Common myeloid progenitor, CD34-positive (primary cell): ENCODE measurements at regions of chr1 and their contacts with region 1.

Region 1: DNA sequence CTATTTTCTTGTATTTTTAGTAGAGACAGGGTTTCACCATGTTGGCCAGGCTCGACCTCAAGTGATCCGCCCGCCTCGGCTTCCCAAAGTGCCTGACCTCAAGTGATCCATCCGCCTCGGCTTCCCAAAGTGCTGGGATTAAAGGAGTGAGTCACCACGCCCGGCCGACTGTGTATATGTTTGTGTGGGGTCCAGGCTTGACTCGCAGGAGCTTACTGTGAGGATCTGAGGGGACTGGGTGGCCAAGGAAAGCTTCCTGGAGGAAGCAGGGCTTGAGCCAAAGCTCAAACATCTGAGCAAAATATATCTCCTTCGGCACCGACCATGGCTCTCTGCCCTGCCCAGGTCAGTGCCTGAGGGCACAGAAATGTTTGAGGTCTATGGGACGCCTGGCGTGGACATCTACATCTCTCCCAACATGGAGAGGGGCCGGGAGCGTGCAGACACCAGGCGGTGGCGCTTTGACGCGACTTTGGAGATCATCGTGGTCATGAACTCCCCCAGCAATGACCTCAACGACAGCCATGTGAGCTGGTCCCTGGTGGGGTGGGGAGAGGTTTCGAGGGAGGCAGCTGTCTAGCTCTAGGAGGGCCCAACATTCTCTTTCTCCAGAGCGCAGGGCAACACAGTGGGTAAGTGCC is 10.5 kb downstream of the PADI3 start:
- DNase-seq: no peak
- H3K4me3 ChIP-seq: no peak overlapping the region
- H3K27ac ChIP-seq: no peak overlapping the region
- H3K4me1 ChIP-seq: no peaks in the 10 kb centered on the region
- H3K27me3 ChIP-seq: no peaks in the 10 kb centered on the region

Region 2: GRCh38 chr1:17274186-17275170 is 15.1 kb after region 1 on chr1:
- CTCF ChIA-PET with region 1: interaction called, 54 read pairs
- POLR2A ChIA-PET with region 1: no interaction called
- DNase-seq: peak; percentile 40 to 59 (median 44)
- H3K4me3 ChIP-seq: no peak overlapping the region
- H3K27ac ChIP-seq: no peak overlapping the region
- H3K4me1 ChIP-seq: peaks cover 0 to 40% (median 13%) of the 10 kb centered on the region in 4 experiments
- H3K27me3 ChIP-seq: no peaks in the 10 kb centered on the region

Region 3: GRCh38 chr1:17307946-17308345 is 48.6 kb after region 1 on chr1 and contains the start of gene PADI4:
- CTCF ChIA-PET with region 1: no interaction called
- POLR2A ChIA-PET with region 1: no interaction called
- DNase-seq: peak; percentile 49 to 89 (median 86)
- H3K4me3 ChIP-seq: peak within 1 kb of the TSS in 4 of 7 experiments; percentile 2 to 53 (median 41)
- H3K27ac ChIP-seq: no peak within 1 kb of the TSS
- H3K4me1 ChIP-seq: peaks cover 11 to 69% (median 39%) of the 10 kb centered on the region in 4 experiments
- H3K27me3 ChIP-seq: no peaks in the 10 kb centered on the region